Mammary epithelial cell (primary cell): ENCODE measurements at regions of chr5 and their contacts with region 1.

Region 1: GRCh38 chr5:107673368-107674136 is 2.8 kb upstream of the EFNA5 start:
- DNase-seq: peak; percentile 82
- H3K4me3 ChIP-seq: peak overlapping the region; percentile 52 to 92 (median 56)
- H3K27ac ChIP-seq: peak overlapping the region; percentile 84
- H3K4me1 ChIP-seq: peaks cover 22% of the 10 kb centered on the region
- H3K27me3 ChIP-seq: no peaks in the 10 kb centered on the region
- CTCF ChIP-seq: peak; percentile 95 to 99

Region 2: GRCh38 chr5:106454651-106455415 is 1218.7 kb before region 1 on chr5:
- CTCF ChIA-PET with region 1: no interaction called
- dilution Hi-C with region 1: no loop called
- in situ Hi-C with region 1: no loop called
- intact Hi-C with region 1: loop called (anchors 10 kb)
- DNase-seq: peak; percentile 91
- H3K4me3 ChIP-seq: no peak overlapping the region
- H3K27ac ChIP-seq: peak overlapping the region; percentile 83
- H3K4me1 ChIP-seq: peaks cover 17% of the 10 kb centered on the region
- H3K27me3 ChIP-seq: no peaks in the 10 kb centered on the region
- CTCF ChIP-seq: peak; percentile 57 to 65

Region 3: GRCh38 chr5:107248066-107248695 is 425.4 kb before region 1 on chr5:
- CTCF ChIA-PET with region 1: no interaction called
- dilution Hi-C with region 1: no loop called
- in situ Hi-C with region 1: no loop called
- intact Hi-C with region 1: loop called (anchors 1 kb)
- DNase-seq: peak; percentile 30
- H3K4me3 ChIP-seq: no peak overlapping the region
- H3K27ac ChIP-seq: no peak overlapping the region
- H3K4me1 ChIP-seq: no peaks in the 10 kb centered on the region
- H3K27me3 ChIP-seq: no peaks in the 10 kb centered on the region
- CTCF ChIP-seq: peak; percentile 77 to 81

Region 4: GRCh38 chr5:107359033-107359915 is 314.3 kb before region 1 on chr5:
- CTCF ChIA-PET with region 1: no interaction called
- dilution Hi-C with region 1: no loop called
- in situ Hi-C with region 1: no loop called
- intact Hi-C with region 1: loop called (anchors 1 kb)
- DNase-seq: peak; percentile 19
- H3K4me3 ChIP-seq: no peak overlapping the region
- H3K27ac ChIP-seq: no peak overlapping the region
- H3K4me1 ChIP-seq: peaks cover 9% of the 10 kb centered on the region
- H3K27me3 ChIP-seq: no peaks in the 10 kb centered on the region
- CTCF ChIP-seq: no peak

Region 5: DNA sequence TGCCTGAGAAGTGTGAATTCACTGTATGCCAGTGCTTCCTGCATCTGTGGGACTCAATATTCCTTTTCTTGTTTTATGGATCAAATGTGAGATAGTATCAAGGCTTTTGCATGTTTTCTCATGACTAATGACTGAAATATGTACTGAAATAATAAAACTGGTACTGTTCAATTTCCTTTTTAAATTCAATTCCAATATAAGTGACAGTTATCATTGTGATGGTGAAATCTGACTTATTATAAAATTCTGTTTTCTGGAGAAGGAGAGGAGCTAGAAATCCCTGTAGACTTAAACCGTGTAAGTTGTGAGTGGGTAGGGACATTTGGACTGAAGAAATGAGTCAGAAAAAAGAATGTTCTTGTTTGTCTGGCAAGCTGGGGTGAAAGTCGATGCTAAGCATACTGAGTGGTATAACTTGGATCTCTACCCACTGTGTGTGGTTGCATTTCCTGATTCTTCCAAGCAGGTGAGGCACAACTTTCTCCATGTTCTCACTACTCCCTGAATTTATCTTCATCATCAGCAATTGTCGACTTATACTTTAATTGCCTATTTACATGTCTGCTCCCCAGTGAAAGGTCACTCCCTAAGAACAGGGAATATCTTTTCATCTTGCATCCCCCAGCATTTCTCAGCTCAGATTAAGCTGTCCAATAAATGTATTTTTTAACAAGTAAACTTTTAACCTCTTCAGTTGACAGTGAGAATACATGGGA is 247.9 kb before region 1 on chr5:
- CTCF ChIA-PET with region 1: no interaction called
- dilution Hi-C with region 1: no loop called
- in situ Hi-C with region 1: no loop called
- intact Hi-C with region 1: loop called (anchors 2 kb)
- DNase-seq: peak; percentile 85
- H3K4me3 ChIP-seq: no peak overlapping the region
- H3K27ac ChIP-seq: peak overlapping the region; percentile 76
- H3K4me1 ChIP-seq: peaks cover 52% of the 10 kb centered on the region
- H3K27me3 ChIP-seq: no peaks in the 10 kb centered on the region
- CTCF ChIP-seq: no peak

Region 6: GRCh38 chr5:107542428-107542827 is 131.1 kb before region 1 on chr5:
- CTCF ChIA-PET with region 1: no interaction called
- dilution Hi-C with region 1: no loop called
- in situ Hi-C with region 1: no loop called
- intact Hi-C with region 1: loop called (anchors 1 kb)
- DNase-seq: peak; percentile 90
- H3K4me3 ChIP-seq: peak overlapping the region in 2 of 3 experiments; percentile 21 to 29
- H3K27ac ChIP-seq: peak overlapping the region; percentile 73
- H3K4me1 ChIP-seq: peaks cover 26% of the 10 kb centered on the region
- H3K27me3 ChIP-seq: no peaks in the 10 kb centered on the region
- CTCF ChIP-seq: no peak

Region 7: GRCh38 chr5:107578051-107578635 is 95.4 kb before region 1 on chr5:
- CTCF ChIA-PET with region 1: no interaction called
- dilution Hi-C with region 1: loop called (anchors 5 kb)
- in situ Hi-C with region 1: loop called in 1 of 2 experiments (anchors 5 kb)
- intact Hi-C with region 1: no loop called
- DNase-seq: peak; percentile 86
- H3K4me3 ChIP-seq: no peak overlapping the region
- H3K27ac ChIP-seq: peak overlapping the region; percentile 77
- H3K4me1 ChIP-seq: peaks cover 36% of the 10 kb centered on the region
- H3K27me3 ChIP-seq: no peaks in the 10 kb centered on the region
- CTCF ChIP-seq: no peak

Region 8: DNA sequence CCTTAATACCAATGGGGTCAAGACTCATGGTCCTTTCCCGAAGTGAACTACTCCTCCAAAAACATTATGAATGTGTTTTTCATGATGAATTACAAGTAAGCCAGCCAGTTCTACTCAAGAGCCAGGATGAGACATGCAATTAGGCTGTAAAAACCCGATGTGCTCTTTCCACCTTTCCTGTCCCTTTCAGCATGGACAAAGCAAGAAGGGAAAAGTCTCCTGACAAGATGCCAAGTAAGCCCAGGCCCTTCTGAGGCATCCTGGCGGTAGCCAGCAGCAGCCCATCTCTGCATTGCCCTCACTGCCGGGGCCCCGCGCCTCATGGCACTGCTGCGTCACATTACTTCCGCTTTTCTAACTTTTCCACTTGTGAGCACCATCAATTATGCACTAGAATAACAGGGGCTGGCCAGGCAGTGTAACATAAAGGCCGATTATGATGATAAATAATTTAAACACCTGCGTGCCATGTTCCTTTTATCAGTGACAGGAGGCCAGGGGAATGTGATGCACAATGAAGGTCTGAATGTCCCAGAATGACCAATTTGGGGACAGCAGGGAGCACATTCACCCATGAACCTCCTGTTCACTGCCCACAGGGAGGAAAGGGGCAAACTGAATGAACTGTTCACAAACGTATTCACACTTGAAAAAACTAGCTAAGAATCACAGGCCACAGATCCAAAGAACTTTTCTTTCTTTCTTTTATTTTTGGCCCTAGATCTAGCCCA is 40.2 kb before region 1 on chr5:
- CTCF ChIA-PET with region 1: no interaction called
- dilution Hi-C with region 1: no loop called
- in situ Hi-C with region 1: no loop called
- intact Hi-C with region 1: no loop called
- DNase-seq: no peak
- H3K4me3 ChIP-seq: no peak overlapping the region
- H3K27ac ChIP-seq: no peak overlapping the region
- H3K4me1 ChIP-seq: no peaks in the 10 kb centered on the region
- H3K27me3 ChIP-seq: no peaks in the 10 kb centered on the region
- CTCF ChIP-seq: no peak